BJ (cell line): ENCODE measurements at regions of chr3 and their contacts with region 1.

Region 1: DNA sequence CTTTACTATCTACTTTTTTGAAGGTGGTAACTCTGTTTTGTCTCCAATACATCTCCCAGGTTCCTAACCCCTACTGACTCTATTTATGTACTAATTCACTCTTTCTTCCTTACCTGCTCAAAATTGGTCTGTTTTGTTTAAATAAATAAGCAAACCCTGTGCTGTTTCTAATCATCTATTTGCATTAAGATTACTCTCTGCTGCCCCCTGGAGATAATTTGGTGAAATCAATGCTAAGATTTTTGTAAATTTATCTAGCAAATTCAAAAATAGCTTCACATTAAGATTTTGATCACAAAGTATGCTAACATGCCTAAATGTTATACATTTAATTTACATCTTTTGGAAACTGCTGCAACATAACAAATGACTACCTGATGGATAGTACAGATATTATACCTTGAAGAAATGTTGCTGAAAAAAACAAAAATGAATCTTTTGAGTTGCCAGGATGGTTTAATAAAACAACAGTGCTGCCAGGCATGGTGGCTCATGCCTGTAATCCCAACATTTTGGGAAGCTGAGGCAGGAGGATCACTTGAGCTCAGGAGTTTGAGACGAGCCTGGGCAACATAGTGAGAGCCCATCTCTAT is 4.4 kb upstream of the CD200R1 start:
- DNase-seq: no peak
- H3K4me3 ChIP-seq: no peak overlapping the region
- H3K27me3 ChIP-seq: no peaks in the 10 kb centered on the region
- CTCF ChIP-seq: peak; percentile 60

Region 2: GRCh38 chr3:112582244-112582874 is 397.0 kb before region 1 on chr3:
- CTCF ChIA-PET with region 1: interaction called, 10 read pairs
- POLR2A ChIA-PET with region 1: no interaction called
- DNase-seq: no peak
- H3K4me3 ChIP-seq: no peak overlapping the region
- H3K27me3 ChIP-seq: no peaks in the 10 kb centered on the region
- CTCF ChIP-seq: peak; percentile 66

Region 3: GRCh38 chr3:112814266-112814665 is 165.1 kb before region 1 on chr3:
- CTCF ChIA-PET with region 1: interaction called, 21 read pairs
- POLR2A ChIA-PET with region 1: no interaction called
- DNase-seq: peak; percentile 28
- H3K4me3 ChIP-seq: no peak overlapping the region
- H3K27me3 ChIP-seq: no peaks in the 10 kb centered on the region
- CTCF ChIP-seq: peak; percentile 66

Region 4: DNA sequence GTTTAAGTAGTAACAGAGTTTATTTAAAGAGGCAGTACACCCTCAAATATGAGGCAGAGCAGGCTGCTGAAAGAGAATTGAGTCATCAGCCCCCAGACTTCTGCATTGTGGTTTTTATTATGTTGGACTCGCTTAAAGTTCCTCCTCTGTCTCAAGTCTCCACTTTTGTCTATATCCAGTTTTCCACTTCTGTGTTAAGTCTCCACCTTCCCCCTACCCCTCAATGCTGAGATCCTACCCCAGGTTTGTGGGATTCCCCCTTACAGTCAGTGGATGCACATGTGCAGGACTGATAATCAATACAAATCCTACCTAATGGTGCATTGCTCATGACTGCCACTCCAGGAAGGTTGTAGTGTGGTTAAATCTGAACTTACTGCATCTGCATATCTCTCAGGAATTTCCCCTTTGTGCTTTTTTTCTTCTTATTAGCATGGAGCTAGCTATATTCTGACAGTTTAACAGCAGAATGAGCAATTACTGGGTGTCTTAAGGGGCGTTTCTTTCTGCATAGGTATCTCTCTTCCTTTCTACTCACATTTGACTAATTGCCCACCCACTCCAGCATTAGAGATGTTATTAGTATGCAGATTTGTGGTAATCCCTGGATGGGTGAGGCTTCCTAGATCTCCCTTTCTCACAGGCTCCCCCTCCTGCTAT is 120.8 kb before region 1 on chr3:
- CTCF ChIA-PET with region 1: no interaction called
- POLR2A ChIA-PET with region 1: no interaction called
- DNase-seq: no peak
- H3K4me3 ChIP-seq: no peak overlapping the region
- H3K27me3 ChIP-seq: no peaks in the 10 kb centered on the region
- CTCF ChIP-seq: no peak

Region 5: GRCh38 chr3:112900113-112900512 is 79.2 kb before region 1 on chr3:
- CTCF ChIA-PET with region 1: no interaction called
- POLR2A ChIA-PET with region 1: no interaction called
- DNase-seq: no peak
- H3K4me3 ChIP-seq: no peak overlapping the region
- H3K27me3 ChIP-seq: peaks cover 1% of the 10 kb centered on the region; the same call in 1 of the 2 replicates
- CTCF ChIP-seq: no peak

Region 6: GRCh38 chr3:112990672-112991602 is 11.6 kb after region 1 on chr3 and contains the start of gene GTPBP8:
- CTCF ChIA-PET with region 1: interaction called, 12 read pairs
- POLR2A ChIA-PET with region 1: no interaction called
- DNase-seq: peak; percentile 50
- H3K4me3 ChIP-seq: peak within 1 kb of the TSS; percentile 98
- H3K27me3 ChIP-seq: no peaks in the 10 kb centered on the region
- CTCF ChIP-seq: peak; percentile 21; the same call in 1 of the 2 replicates
- polyA plus RNA-seq, gene GTPBP8: 16.7 and 18.3 TPM in 2 replicates